ENCODE measurements at regions of chr11 and their contacts with region 1.

Region 1: DNA sequence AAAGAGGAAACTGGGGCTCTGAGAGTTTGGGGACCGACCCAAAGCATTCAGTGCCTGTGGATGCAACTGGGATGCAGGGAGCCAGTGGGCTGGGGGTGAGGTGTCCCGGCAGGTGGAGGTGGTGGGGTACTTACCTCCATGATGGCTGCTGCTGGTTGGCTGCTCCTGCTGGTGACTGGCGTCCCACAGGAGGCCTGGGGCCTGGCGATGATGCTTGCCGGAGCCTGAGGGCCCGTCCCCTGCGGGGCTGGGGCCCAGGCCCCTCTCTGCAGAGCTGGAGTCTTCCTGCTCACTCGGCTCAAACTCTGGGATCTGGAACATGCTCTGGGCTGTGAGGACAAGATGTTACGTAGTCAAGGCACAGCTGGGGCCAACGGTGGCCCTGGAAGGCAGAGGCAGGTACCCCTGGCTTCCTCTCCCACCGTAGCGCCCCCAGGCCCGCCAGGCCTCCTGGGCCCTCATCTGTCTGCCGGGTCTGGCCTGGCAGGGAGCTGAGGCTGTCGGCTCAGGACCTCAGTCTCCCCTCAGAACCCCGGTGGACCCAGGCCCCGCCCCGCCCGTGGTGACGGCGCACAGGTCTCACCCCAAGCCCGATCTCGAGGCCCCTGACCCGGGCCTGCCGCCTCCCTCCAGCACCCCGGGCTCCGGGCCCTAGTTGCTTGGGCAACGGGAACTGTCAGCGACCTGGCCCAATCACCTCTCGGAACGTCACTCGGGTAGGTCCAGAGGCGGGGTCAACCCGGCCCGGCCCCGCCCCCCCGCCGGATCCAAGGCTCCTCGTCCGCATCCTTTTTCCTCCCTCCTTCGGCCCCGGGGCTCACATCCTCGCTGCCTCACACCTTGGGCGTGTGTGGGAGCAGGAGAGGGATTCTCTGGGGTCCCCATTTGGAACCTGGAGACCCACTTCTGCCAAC is at the start of gene BAD:
- DNase-seq: peak; percentile 81 to 94 (median 89)
- ATAC-seq: peak; percentile 79 to 83 (median 80)
- H3K4me3 ChIP-seq: peak within 1 kb of the TSS; percentile 76 to 87
- H3K4me3 Mint-ChIP-seq: peak within 1 kb of the TSS; percentile 84 to 86 (median 85)
- H3K27ac ChIP-seq: peak within 1 kb of the TSS; percentile 100
- H3K27ac Mint-ChIP-seq: peak within 1 kb of the TSS; percentile 92 to 95
- H3K4me1 ChIP-seq: peaks cover 4 to 37% of the 10 kb centered on the region in 2 experiments
- H3K4me1 Mint-ChIP-seq: peaks cover 19 to 27% (median 25%) of the 10 kb centered on the region in 3 donors
- H3K27me3 ChIP-seq: peaks cover 0 to under 1% of the 10 kb centered on the region in 2 experiments
- H3K27me3 Mint-ChIP-seq: no peaks in the 10 kb centered on the region
- total RNA-seq, gene BAD: 17.5 to 37.7 (median 29.1) TPM

Region 2: GRCh38 chr11:64271740-64272132 is 12.6 kb before region 1 on chr11:
- CTCF ChIA-PET with region 1: interaction called, 3 to 16 read pairs
- POLR2A ChIA-PET with region 1: interaction called, 5 to 6 read pairs
- DNase-seq: no peak
- ATAC-seq: no peak
- H3K4me3 ChIP-seq: peak overlapping the region; percentile 68 to 85
- H3K4me3 Mint-ChIP-seq: peak overlapping the region; percentile 84 to 95 (median 84)
- H3K27ac ChIP-seq: peak overlapping the region; percentile 95
- H3K27ac Mint-ChIP-seq: peak overlapping the region; percentile 93 to 97
- H3K4me1 ChIP-seq: peaks cover 5 to 41% of the 10 kb centered on the region in 2 experiments
- H3K4me1 Mint-ChIP-seq: peaks cover 22 to 31% (median 23%) of the 10 kb centered on the region in 3 donors
- H3K27me3 ChIP-seq: no peaks in the 10 kb centered on the region
- H3K27me3 Mint-ChIP-seq: no peaks in the 10 kb centered on the region

Region 3: GRCh38 chr11:64304316-64305072 is 20.2 kb after region 1 on chr11:
- CTCF ChIA-PET with region 1: interaction called, 4 to 13 read pairs
- POLR2A ChIA-PET with region 1: interaction called, 3 to 7 read pairs
- DNase-seq: peak; percentile 77 to 96 (median 90)
- ATAC-seq: peak; percentile 24 to 33 (median 31)
- H3K4me3 ChIP-seq: peak overlapping the region; percentile 88 to 89
- H3K4me3 Mint-ChIP-seq: peak overlapping the region; percentile 86 to 99 (median 92)
- H3K27ac ChIP-seq: peak overlapping the region; percentile 93
- H3K27ac Mint-ChIP-seq: peak overlapping the region; percentile 94
- H3K4me1 ChIP-seq: peaks cover 15 to 56% of the 10 kb centered on the region in 2 experiments
- H3K4me1 Mint-ChIP-seq: peaks cover 36 to 40% (median 38%) of the 10 kb centered on the region in 3 donors
- H3K27me3 ChIP-seq: peaks cover 0 to 45% of the 10 kb centered on the region in 2 experiments
- H3K27me3 Mint-ChIP-seq: peaks cover 10 to 23% of the 10 kb centered on the region in 2 donors